Caco-2 (cell line): ENCODE measurements at regions of chr9 and their contacts with region 1.

Region 1: GRCh38 chr9:71604197-71605063 is 163.9 kb downstream of the CEMIP2 start:
- DNase-seq: peak; percentile 43 to 58
- H3K4me3 ChIP-seq: no peak overlapping the region
- H3K4me3 Mint-ChIP-seq: no peak overlapping the region
- H3K27ac Mint-ChIP-seq: no peak overlapping the region
- H3K4me1 ChIP-seq: no peaks in the 10 kb centered on the region
- H3K4me1 Mint-ChIP-seq: no peaks in the 10 kb centered on the region
- H3K27me3 ChIP-seq: no peaks in the 10 kb centered on the region
- H3K27me3 Mint-ChIP-seq: no peaks in the 10 kb centered on the region
- CTCF ChIP-seq: peak; percentile 28 to 31

Region 2: GRCh38 chr9:71587576-71588362 is 16.7 kb before region 1 on chr9:
- CTCF ChIA-PET with region 1: no interaction called
- POLR2A ChIA-PET with region 1: no interaction called
- intact Hi-C with region 1: no loop called
- DNase-seq: no peak
- H3K4me3 ChIP-seq: no peak overlapping the region
- H3K4me3 Mint-ChIP-seq: no peak overlapping the region
- H3K27ac Mint-ChIP-seq: no peak overlapping the region
- H3K4me1 ChIP-seq: no peaks in the 10 kb centered on the region
- H3K4me1 Mint-ChIP-seq: no peaks in the 10 kb centered on the region
- H3K27me3 ChIP-seq: no peaks in the 10 kb centered on the region
- H3K27me3 Mint-ChIP-seq: no peaks in the 10 kb centered on the region
- CTCF ChIP-seq: no peak

Region 3: DNA sequence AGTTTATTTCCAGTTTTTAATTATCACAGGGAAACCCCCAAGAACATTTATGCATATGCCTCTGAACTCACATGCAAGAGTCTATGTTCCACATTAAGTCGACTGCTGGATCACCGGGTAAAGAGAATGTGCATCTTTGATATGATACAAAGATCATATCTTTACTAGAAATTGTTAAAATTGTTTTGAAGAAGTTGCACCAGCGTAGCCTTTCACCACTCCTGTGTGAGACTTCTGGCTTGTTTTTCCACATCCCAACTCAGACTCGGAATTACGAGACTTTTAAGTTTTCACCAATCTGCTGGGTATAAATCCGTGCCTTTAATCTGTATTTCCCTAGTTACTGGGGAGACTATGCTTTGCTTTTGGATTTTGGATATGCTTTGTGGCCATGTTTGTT is 50.7 kb after region 1 on chr9:
- CTCF ChIA-PET with region 1: no interaction called
- POLR2A ChIA-PET with region 1: no interaction called
- intact Hi-C with region 1: loop called (anchors 10 kb)
- DNase-seq: no peak
- H3K4me3 ChIP-seq: no peak overlapping the region
- H3K4me3 Mint-ChIP-seq: no peak overlapping the region
- H3K27ac Mint-ChIP-seq: no peak overlapping the region
- H3K4me1 ChIP-seq: no peaks in the 10 kb centered on the region
- H3K4me1 Mint-ChIP-seq: no peaks in the 10 kb centered on the region
- H3K27me3 ChIP-seq: no peaks in the 10 kb centered on the region
- H3K27me3 Mint-ChIP-seq: no peaks in the 10 kb centered on the region
- CTCF ChIP-seq: no peak

Region 4: DNA sequence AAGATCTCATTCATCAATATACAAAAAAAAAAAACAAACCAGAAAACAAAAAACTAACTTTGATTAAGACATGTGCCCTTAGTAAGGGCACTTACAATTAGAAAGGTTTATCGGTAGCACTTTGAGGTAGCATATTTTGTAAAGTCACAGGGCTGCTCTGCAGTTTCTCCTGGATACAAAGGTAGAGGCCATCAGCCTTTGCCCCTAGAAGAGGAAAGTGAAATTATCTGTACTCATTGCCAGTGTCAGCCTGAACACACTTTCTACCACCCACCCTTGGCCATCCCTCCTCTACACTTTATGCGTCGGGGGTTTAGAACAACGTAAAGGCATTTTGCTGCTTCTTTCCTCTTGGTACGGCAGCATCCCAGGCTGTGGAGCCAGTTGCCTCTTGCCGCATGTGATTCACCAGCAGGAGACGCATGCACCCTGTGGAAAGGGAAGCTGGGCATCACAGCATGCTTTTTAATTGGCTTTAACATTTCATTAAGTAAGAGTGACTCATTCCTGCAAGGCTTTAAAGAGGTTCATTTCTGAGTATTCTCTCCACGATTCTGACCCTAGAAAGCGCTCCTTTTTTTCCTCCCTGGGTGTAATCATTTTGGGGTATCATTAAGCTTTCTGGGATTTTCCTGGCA is 79.3 kb after region 1 on chr9:
- CTCF ChIA-PET with region 1: no interaction called
- POLR2A ChIA-PET with region 1: no interaction called
- intact Hi-C with region 1: loop called (anchors 10 kb)
- DNase-seq: no peak
- H3K4me3 ChIP-seq: no peak overlapping the region
- H3K4me3 Mint-ChIP-seq: no peak overlapping the region
- H3K27ac Mint-ChIP-seq: no peak overlapping the region
- H3K4me1 ChIP-seq: peaks cover 14% of the 10 kb centered on the region; the same call in 1 of the 2 replicates
- H3K4me1 Mint-ChIP-seq: peaks cover 6% of the 10 kb centered on the region
- H3K27me3 ChIP-seq: no peaks in the 10 kb centered on the region
- H3K27me3 Mint-ChIP-seq: no peaks in the 10 kb centered on the region
- CTCF ChIP-seq: no peak